Dorsolateral prefrontal cortex (tissue), 120 donors: ENCODE measurements at regions of chr17 and their contacts with region 1.

Region 1: GRCh38 chr17:17783116-17783824 is 53.5 kb downstream of the SREBF1 start:
- DNase-seq: peak in 6 of 10 donors; percentile 51 to 72 (median 66)
- H3K4me3 ChIP-seq: peak overlapping the region; percentile 52 to 79 (median 67)
- H3K27ac ChIP-seq: peak overlapping the region; percentile 73 to 100 (median 97)
- H3K27me3 ChIP-seq: no peaks in the 10 kb centered on the region
- CTCF ChIP-seq: peak in 41 of 56 donors; percentile 12 to 62 (median 41)

Region 2: DNA sequence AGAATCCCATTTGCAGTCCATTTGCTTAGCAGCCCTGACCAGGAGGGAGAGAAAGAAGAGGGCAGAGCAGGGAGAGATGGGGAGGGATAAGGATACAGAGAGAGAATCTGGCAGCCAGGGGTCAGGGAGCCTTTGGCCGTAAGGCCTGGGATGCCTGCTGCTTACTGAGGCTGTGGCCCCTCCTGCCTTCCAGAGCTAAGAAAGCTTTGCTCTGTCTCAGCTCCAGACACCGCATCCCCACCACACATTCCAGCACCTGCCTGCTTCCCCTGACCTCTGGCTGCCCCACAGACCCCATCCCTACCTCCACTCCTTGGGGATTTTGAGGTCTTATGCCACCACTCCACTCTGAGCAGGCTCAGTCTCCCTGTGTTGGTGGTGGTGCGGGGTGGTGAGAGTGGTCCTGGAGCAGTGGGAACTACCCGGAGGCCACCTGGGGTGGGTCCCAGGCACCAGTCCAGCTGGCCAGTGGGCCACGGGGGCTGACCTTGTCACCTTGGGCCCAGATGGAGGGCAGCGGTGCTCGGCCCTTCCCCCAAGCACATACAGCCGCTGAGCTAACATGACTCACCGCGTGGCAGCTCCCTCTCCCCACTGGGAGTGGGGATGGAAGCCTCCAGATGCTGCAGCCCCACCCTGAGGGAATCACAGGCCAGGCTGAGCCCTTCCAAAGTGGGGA is 43.7 kb before region 1 on chr17:
- intact Hi-C with region 1: loop called in 1 of 2 experiments (anchors 2 kb)
- DNase-seq: peak in 9 of 10 donors; percentile 52 to 90 (median 78)
- H3K4me3 ChIP-seq: peak overlapping the region in 53 of 59 donors; percentile 2 to 73 (median 52)
- H3K27ac ChIP-seq: peak overlapping the region; percentile 85 to 100 (median 98)
- H3K27me3 ChIP-seq: no peaks in the 10 kb centered on the region
- CTCF ChIP-seq: peak in 5 of 56 donors; percentile 9 to 34 (median 22)

Region 3: GRCh38 chr17:17752089-17752820 is 31.0 kb before region 1 on chr17:
- intact Hi-C with region 1: loop called (anchors 1 to 2 kb)
- DNase-seq: peak; percentile 83 to 94 (median 92)
- H3K4me3 ChIP-seq: peak overlapping the region; percentile 4 to 70 (median 54)
- H3K27ac ChIP-seq: peak overlapping the region; percentile 28 to 100 (median 89)
- H3K27me3 ChIP-seq: no peaks in the 10 kb centered on the region
- CTCF ChIP-seq: peak in 51 of 56 donors; percentile 6 to 69 (median 46)

Region 4: DNA sequence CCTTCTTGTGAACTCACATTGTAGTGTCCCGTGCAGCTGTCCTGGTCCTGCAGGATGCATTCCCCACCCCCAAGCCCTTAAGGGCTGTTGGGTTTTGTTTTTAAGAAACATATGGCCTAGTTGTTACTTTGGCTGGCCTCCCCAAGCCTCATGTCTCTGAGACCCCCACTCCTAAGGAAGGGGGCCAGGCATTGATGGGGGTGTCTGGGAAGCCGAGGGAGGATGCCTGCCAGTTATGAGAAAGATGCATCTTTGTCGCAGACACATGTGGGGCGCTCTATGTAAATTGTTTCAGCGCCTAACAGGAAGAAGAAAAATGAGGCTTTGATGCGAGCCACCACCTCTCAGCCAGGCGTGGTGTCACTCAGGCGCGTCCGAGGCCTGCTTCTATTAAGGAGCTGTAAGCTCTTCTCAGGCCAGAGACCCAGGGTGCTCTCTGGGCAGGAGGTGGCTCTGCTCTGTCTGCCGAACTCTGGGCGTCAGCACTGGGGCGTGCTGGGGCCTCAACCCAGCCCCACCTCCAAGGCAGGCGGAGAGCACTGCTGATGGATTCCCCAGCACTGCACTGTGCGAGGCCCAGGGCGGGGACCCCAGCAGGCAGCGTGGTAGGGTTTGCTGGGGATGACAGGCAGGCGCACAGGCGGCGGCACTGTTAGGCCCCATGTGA is 17.1 kb before region 1 on chr17:
- intact Hi-C with region 1: no loop called
- DNase-seq: no peak
- H3K4me3 ChIP-seq: no peak overlapping the region
- H3K27ac ChIP-seq: peak overlapping the region; percentile 49 to 97 (median 90)
- H3K27me3 ChIP-seq: no peaks in the 10 kb centered on the region
- CTCF ChIP-seq: peak in 18 of 56 donors; percentile 6 to 46 (median 21)

Region 5: DNA sequence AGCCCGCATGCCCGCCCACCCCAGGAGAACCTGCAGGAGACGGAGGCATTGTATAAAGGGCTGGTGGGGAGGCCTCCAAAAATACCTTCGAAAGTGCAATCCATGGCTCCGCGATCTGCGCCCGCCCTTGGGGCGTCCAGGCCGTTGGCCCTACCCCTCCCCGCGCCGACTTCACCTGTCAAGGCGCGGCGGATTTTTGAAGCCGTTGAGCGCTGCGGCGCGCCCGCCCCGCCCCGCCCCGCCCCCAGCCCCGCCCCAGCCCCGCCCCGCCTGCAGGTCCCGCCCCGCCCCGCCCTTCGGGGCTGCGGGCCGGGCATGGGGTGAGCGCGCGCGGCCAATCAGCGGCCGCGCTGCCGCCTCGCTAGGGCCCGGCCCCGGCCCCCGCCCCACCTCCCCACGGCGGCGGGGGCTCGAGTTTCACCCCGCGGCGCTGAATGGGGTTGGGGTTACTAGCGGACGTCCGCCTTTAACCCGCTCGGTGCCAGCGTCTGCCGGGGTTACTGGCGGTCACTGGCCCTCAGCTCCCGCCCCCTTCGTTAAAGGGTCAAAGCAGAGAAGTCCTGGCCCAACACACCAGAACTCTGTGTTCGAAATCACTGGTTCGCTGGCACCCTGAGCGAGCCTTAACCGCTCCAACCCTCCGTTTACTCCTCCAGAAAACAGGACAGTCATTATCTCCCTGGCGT is 40.3 kb after region 1 on chr17:
- intact Hi-C with region 1: loop called in 1 of 2 experiments (anchors 5 kb)
- DNase-seq: peak; percentile 77 to 92 (median 86)
- H3K4me3 ChIP-seq: peak overlapping the region; percentile 52 to 90 (median 73)
- H3K27ac ChIP-seq: peak overlapping the region; percentile 63 to 99 (median 94)
- H3K27me3 ChIP-seq: no peaks in the 10 kb centered on the region
- CTCF ChIP-seq: no peak